Activated CD4-positive, alpha-beta memory T cell treated with anti-CD3 and anti-CD28 coated beads, Interleukin-2, amount 10 ng/mL, durations not matched to agents 7 days and 5 days (primary cell): ENCODE measurements at regions of chr1 and their contacts with region 1.

Region 1: DNA sequence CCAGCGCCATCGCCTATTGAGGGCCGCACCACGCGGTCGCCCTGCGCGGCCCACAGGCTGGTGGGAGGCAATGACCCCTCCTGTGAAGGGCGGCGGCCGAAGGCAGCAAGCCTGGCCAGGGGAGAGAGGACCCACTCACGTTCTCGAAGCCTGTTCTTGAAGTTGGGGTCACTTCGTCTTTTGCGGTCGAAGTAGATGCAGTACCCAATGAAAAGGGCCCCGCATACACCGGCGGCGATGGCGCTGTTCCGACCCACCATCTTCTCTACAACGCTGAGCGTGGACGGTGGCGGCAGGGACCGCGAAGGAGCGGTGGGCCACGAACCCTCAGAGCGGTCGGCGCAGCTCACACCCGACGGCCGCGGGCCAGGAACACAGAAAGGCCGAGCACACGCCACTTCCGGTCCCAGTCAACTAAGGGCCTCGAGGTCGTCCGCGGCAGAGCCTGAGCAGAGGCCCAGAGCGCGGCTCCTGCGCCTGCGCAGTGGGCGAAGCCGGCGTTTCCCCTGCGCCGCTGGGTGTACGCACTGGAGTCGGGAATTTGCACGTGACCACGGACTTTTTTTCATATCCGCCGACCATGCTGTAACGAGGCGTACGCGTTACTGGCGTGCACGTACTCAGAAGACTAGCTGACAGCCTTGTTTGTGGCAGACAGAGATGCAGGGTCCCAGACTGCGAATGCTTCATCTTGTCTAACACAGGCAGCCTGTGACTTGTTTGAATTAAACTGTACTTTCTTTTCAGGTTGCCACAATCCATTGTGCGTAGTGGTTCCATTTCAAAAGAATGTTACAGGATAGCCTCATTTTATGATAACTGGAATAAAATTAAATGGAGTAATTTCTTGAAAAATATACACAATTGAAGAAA is at the start of gene TOMM20:
- DNase-seq: peak; percentile 95
- H3K4me3 Mint-ChIP-seq: peak within 1 kb of the TSS; percentile 98
- H3K27ac Mint-ChIP-seq: peak within 1 kb of the TSS; percentile 92
- H3K4me1 Mint-ChIP-seq: peaks cover 39% of the 10 kb centered on the region
- H3K27me3 Mint-ChIP-seq: no peaks in the 10 kb centered on the region
- total RNA-seq, gene TOMM20: 81.4 to 89.3 TPM

Region 2: DNA sequence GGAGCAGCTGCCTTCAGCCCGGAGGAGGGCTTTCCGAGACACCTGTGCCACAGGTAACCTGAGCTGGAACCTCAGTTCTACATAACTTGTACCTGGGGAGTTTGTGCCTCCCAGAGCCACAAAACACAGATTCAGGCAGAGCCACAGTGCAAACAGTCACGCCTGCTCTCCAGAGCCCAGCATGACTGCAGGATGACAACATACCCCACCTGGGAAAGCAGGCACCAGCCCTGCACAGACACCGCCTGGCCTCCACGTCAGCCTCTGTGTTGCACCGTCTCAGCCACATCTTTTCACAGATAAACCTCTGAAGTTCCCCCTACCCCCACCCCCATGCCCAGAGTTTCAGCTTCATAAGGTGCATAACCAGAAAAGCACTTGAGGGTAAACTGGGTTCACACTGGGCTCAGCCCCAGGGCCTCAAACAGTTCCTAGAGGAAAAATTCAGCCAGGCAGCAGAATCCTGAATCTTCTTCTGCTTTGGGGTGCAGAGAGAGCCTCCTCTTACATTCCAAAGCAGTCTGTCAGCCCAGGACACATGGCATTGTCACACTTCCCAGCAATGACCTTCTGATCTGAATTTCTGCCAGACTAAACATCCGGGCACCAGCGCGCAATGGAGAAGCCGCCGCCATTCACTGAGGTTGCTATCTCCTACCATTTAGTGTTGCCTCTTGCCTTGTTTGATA is 229.5 kb before region 1 on chr1:
- CTCF ChIA-PET with region 1: no interaction called
- POLR2A ChIA-PET with region 1: no interaction called
- DNase-seq: no peak
- H3K4me3 Mint-ChIP-seq: no peak overlapping the region
- H3K27ac Mint-ChIP-seq: no peak overlapping the region
- H3K4me1 Mint-ChIP-seq: peaks cover 8% of the 10 kb centered on the region
- H3K27me3 Mint-ChIP-seq: no peaks in the 10 kb centered on the region

Region 3: DNA sequence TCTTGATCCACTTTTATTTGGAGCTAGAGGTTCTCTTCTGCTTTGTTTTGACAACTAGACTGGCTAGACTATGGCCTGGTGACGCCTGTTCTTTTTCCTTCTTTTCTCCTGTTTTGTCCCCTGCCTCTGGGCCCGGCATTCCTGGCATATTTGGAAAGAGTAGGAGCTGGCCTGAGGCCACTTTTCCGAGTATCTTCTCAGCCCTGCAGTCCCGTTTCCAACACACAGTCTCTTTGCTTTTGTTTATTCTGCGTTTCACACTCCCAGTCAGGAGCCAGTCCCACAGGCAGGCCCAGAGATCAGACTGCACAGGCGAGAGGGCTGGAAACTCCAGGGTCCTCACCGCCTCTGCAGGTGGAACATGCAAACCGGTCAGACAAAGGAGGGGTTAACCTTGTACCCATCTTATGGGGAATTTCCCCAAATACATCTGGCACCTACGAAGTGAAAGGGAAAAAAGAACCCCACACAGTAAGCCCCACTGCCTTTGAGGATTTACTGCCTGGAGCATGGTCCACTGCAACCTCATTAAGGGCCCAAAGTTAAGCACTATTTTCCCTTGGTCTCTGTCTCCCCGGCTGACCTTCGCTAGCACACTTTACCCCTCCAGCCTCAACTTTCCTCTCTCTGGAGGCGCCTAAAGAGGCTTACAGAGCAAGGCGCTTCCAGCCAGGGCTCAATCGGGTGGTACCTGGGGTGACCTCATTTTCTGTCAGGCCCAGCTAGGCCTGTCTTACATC is 141.1 kb before region 1 on chr1:
- CTCF ChIA-PET with region 1: no interaction called
- POLR2A ChIA-PET with region 1: no interaction called
- DNase-seq: no peak
- H3K4me3 Mint-ChIP-seq: peak overlapping the region; percentile 5
- H3K27ac Mint-ChIP-seq: peak overlapping the region; percentile 63
- H3K4me1 Mint-ChIP-seq: peaks cover 61% of the 10 kb centered on the region
- H3K27me3 Mint-ChIP-seq: no peaks in the 10 kb centered on the region

Region 4: GRCh38 chr1:235105051-235106043 is 23.3 kb before region 1 on chr1:
- CTCF ChIA-PET with region 1: interaction called, 8 read pairs
- POLR2A ChIA-PET with region 1: interaction called, 42 read pairs
- DNase-seq: peak; percentile 44
- H3K4me3 Mint-ChIP-seq: peak overlapping the region; percentile 60
- H3K27ac Mint-ChIP-seq: peak overlapping the region; percentile 85
- H3K4me1 Mint-ChIP-seq: peaks cover 42% of the 10 kb centered on the region
- H3K27me3 Mint-ChIP-seq: peaks cover 8% of the 10 kb centered on the region

Region 5: GRCh38 chr1:235190431-235190830 is 61.7 kb after region 1 on chr1:
- CTCF ChIA-PET with region 1: no interaction called
- POLR2A ChIA-PET with region 1: no interaction called
- DNase-seq: no peak
- H3K4me3 Mint-ChIP-seq: no peak overlapping the region
- H3K27ac Mint-ChIP-seq: no peak overlapping the region
- H3K4me1 Mint-ChIP-seq: peaks cover 8% of the 10 kb centered on the region
- H3K27me3 Mint-ChIP-seq: no peaks in the 10 kb centered on the region